Uterus (tissue), 4 donors: ENCODE measurements at regions of chr9 and their contacts with region 1.

Region 1: GRCh38 chr9:130866474-130866965 is 30.1 kb downstream of the QRFP start:
- DNase-seq: peak; percentile 60 to 69
- H3K4me3 ChIP-seq: no peak overlapping the region
- H3K27ac ChIP-seq: peak overlapping the region; percentile 9 to 36
- H3K4me1 ChIP-seq: peaks cover 13 to 16% of the 10 kb centered on the region in 2 donors
- H3K27me3 ChIP-seq: no peaks in the 10 kb centered on the region
- CTCF ChIP-seq: peak; percentile 60 to 78 (median 72)
- POLR2A ChIP-seq: no peak

Region 2: GRCh38 chr9:130707225-130707976 is 159.1 kb before region 1 on chr9:
- intact Hi-C with region 1: loop called (anchors 5 kb)
- DNase-seq: peak; percentile 52 to 69
- H3K4me3 ChIP-seq: no peak overlapping the region
- H3K27ac ChIP-seq: no peak overlapping the region
- H3K4me1 ChIP-seq: no peaks in the 10 kb centered on the region
- H3K27me3 ChIP-seq: no peaks in the 10 kb centered on the region
- CTCF ChIP-seq: peak; percentile 66 to 74 (median 70)
- POLR2A ChIP-seq: no peak

Region 3: DNA sequence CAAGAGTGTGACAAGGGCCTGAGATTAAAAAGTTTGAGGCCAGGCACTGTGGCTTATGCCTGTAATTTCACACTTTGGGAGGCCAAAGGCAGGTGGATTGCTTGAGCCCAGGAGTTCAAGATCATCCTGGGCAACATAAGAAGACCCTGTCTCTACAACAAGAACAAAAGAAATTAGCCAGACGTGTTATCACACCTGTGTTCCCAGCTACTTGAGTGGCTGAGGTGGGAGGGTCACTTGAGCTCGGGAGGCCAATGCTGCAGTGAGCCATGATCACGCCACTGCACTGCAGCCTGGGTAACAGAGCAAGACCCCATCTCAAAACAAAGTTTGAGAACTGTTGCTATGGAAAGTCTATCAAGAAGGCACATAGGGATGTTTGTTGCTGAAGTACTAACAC is 148.0 kb before region 1 on chr9:
- intact Hi-C with region 1: no loop called
- DNase-seq: no peak
- H3K4me3 ChIP-seq: no peak overlapping the region
- H3K27ac ChIP-seq: no peak overlapping the region
- H3K4me1 ChIP-seq: no peaks in the 10 kb centered on the region
- H3K27me3 ChIP-seq: no peaks in the 10 kb centered on the region
- CTCF ChIP-seq: no peak
- POLR2A ChIP-seq: no peak